Activated CD8-positive, alpha-beta T cell treated with anti-CD3 and anti-CD28 coated beads for 36 hours (primary cell): ENCODE measurements at regions of chr11 and their contacts with region 1.

Region 1: GRCh38 chr11:81787584-81788049 is 946.0 kb downstream of the FAM181B start:
- DNase-seq: peak; percentile 13
- ATAC-seq: peak; percentile 90
- H3K4me3 Mint-ChIP-seq: no peak overlapping the region
- H3K27ac Mint-ChIP-seq: peak overlapping the region; percentile 58
- H3K4me1 Mint-ChIP-seq: peaks cover 7% of the 10 kb centered on the region
- H3K27me3 Mint-ChIP-seq: no peaks in the 10 kb centered on the region
- CTCF ChIP-seq: peak; percentile 55

Region 2: DNA sequence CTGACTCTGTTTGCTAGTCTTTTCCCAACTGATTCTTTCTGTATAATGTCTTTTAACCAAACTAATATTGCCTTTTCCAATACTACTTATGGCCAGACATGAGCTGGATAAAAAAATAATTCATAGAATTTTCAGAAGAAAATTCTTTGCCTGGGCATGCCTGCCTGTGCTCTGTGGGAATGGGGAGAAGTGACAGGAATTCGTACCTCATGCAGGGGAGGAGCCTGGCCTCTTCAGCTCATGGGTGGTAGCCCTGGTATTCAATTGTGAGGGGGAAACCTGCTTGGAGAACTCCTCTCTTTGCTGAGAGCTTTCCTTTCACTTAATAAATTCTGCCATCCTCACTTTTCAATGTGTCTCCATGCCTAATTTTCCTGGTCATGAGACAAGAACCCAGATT is 17.2 kb after region 1 on chr11:
- CTCF ChIA-PET with region 1: no interaction called
- POLR2A ChIA-PET with region 1: no interaction called
- intact Hi-C with region 1: no loop called
- DNase-seq: no peak
- ATAC-seq: no peak
- H3K4me3 Mint-ChIP-seq: no peak overlapping the region
- H3K27ac Mint-ChIP-seq: no peak overlapping the region
- H3K4me1 Mint-ChIP-seq: no peaks in the 10 kb centered on the region
- H3K27me3 Mint-ChIP-seq: no peaks in the 10 kb centered on the region
- CTCF ChIP-seq: no peak

Region 3: GRCh38 chr11:81869351-81870065 is 81.9 kb after region 1 on chr11:
- CTCF ChIA-PET with region 1: interaction called, 6 read pairs
- POLR2A ChIA-PET with region 1: no interaction called
- intact Hi-C with region 1: loop called (anchors 5 kb)
- DNase-seq: peak; percentile 99
- ATAC-seq: peak; percentile 83
- H3K4me3 Mint-ChIP-seq: peak overlapping the region; percentile 76
- H3K27ac Mint-ChIP-seq: peak overlapping the region; percentile 99
- H3K4me1 Mint-ChIP-seq: peaks cover 54% of the 10 kb centered on the region
- H3K27me3 Mint-ChIP-seq: peaks cover 2% of the 10 kb centered on the region
- CTCF ChIP-seq: no peak

Region 4: DNA sequence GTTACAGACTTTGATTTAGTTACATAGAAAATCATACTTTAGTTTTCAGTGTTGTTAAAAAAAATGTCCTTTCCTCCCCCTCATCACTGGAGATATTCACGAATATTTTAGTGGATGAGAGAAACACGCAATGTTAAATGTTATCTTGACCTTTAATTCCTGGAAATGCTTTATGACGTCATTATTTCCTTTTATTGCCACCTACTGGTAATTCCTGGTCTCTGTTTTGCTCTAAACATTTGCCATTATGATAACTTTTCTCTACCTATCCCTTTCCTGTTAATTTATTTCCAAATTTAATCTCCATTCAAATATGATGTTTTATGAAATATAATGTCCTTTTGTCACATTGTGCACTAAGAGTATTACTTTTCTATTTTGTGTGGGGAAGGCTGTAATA is 175.4 kb after region 1 on chr11:
- CTCF ChIA-PET with region 1: interaction called, 9 read pairs
- POLR2A ChIA-PET with region 1: no interaction called
- intact Hi-C with region 1: loop called (anchors 5 kb)
- DNase-seq: no peak
- ATAC-seq: peak; percentile 65
- H3K4me3 Mint-ChIP-seq: peak overlapping the region; percentile 44
- H3K27ac Mint-ChIP-seq: peak overlapping the region; percentile 50
- H3K4me1 Mint-ChIP-seq: peaks cover 23% of the 10 kb centered on the region
- H3K27me3 Mint-ChIP-seq: no peaks in the 10 kb centered on the region
- CTCF ChIP-seq: peak; percentile 45

Region 5: GRCh38 chr11:82038153-82038552 is 250.5 kb after region 1 on chr11:
- CTCF ChIA-PET with region 1: interaction called, 4 read pairs
- POLR2A ChIA-PET with region 1: no interaction called
- intact Hi-C with region 1: loop called (anchors 10 kb)
- DNase-seq: no peak
- ATAC-seq: no peak
- H3K4me3 Mint-ChIP-seq: no peak overlapping the region
- H3K27ac Mint-ChIP-seq: no peak overlapping the region
- H3K4me1 Mint-ChIP-seq: no peaks in the 10 kb centered on the region
- H3K27me3 Mint-ChIP-seq: peaks cover 1% of the 10 kb centered on the region
- CTCF ChIP-seq: no peak